ENCODE measurements at regions of chr15 and their contacts with region 1.

Region 1: DNA sequence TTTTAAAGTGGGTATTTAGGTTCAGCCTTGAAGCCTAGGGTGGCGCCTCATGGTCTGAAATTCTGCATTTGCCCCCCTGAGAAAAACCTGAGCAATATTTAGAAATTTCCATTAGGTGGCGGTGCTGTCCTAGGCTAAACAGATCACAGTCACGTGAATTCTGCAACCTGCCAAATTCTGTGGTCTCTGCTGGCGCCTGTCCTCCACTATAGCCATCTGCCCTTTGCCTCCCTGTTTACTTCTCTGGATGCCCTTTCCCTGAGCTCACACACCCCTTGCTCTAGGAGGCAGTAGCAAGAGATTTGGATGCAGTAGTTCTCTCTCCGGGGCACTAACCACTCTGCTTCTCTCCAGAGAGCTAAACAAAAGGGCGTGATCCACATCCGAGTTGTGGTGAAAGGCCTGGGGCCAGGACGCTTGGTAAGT is 9.1 kb downstream of the MRPS11 start:
- DNase-seq: no peak
- H3K4me3 ChIP-seq: no peak overlapping the region
- H3K27ac ChIP-seq: no peak overlapping the region
- H3K4me1 ChIP-seq: no peaks in the 10 kb centered on the region
- H3K27me3 ChIP-seq: no peaks in the 10 kb centered on the region
- CTCF ChIP-seq: peak; percentile 68

Region 2: DNA sequence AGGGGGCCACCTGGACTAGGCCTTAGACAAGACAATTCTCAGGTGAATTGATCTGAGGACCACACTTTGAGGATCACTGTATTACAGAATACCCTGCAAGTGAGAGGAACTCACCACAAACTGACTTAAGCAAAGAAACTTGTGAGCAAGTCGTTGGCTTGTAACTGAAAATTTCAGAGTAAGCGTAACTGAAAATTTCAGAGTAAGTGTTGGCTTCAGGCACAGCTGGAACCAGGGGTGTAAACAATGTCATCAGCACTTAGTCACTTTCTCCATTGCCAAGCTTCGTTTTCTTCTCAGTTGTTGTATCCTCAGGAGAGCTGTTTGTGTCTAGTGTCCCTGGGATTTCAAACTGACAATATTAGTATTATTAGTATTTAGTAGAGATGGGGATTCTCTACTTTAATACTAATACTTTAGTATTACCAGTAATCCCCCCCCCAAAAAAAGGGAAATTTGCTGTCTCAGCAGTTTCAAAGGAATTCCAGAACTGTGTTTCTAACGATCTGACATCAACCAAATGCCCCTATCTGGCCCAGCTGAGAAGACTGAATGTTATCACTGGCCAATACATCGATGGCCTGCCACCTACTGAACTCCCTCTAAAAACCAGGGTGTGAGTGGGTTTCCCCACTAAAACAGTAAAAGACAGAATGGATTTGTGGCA is 694.6 kb before region 1 on chr15:
- CTCF ChIA-PET with region 1: no interaction called
- POLR2A ChIA-PET with region 1: no interaction called
- intact Hi-C with region 1: no loop called
- DNase-seq: no peak
- H3K4me3 ChIP-seq: no peak overlapping the region
- H3K27ac ChIP-seq: no peak overlapping the region
- H3K4me1 ChIP-seq: no peaks in the 10 kb centered on the region
- H3K27me3 ChIP-seq: no peaks in the 10 kb centered on the region; the same call in 1 of the 2 replicates
- CTCF ChIP-seq: no peak

Region 3: DNA sequence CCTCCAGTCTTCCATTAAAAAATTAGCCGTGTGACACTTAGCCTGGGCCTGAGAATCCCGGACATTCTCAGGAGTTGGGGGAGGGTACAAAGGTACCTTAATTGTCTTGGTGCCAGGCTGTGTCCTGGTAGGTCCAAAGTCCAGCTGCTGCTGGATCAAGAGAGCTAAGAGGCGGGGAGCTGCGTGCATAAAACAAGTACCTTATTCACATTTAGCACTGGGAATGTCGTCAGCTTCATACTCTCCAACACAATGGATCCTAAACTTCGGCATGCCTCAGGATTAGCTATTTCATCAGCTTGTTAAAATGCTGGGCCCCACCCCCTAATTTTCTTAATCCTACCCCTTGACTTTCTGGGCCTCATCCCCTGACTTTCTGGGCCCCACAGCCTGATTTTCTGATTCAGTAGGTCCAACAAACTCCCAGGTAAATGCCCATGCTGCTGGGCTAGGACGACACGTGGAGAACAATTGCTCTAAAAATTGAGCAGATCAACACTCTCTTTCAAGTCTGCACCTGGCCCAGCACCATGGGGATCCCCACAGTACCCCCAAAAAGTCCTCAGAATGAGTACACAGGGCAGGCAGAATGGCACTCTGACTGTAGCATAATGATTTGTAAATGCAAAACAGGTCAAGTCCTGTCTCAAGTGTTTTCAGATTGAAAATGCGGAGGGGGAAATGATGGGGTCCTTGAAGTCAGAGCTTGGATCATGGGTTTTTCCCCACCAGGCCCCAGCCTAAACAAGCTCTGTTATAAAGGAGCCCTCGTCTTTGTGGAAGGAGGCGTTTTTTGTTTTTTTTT is 138.9 kb after region 1 on chr15:
- CTCF ChIA-PET with region 1: no interaction called
- POLR2A ChIA-PET with region 1: no interaction called
- intact Hi-C with region 1: loop called (anchors 2 kb)
- DNase-seq: no peak
- H3K4me3 ChIP-seq: no peak overlapping the region
- H3K27ac ChIP-seq: no peak overlapping the region
- H3K4me1 ChIP-seq: no peaks in the 10 kb centered on the region
- H3K27me3 ChIP-seq: no peaks in the 10 kb centered on the region
- CTCF ChIP-seq: no peak

Region 4: GRCh38 chr15:88664151-88664778 is 187.6 kb after region 1 on chr15:
- CTCF ChIA-PET with region 1: no interaction called
- POLR2A ChIA-PET with region 1: no interaction called
- intact Hi-C with region 1: loop called (anchors 1 kb)
- DNase-seq: no peak
- H3K4me3 ChIP-seq: no peak overlapping the region
- H3K27ac ChIP-seq: no peak overlapping the region
- H3K4me1 ChIP-seq: peaks cover 9% of the 10 kb centered on the region
- H3K27me3 ChIP-seq: no peaks in the 10 kb centered on the region; the same call in 1 of the 2 replicates
- CTCF ChIP-seq: peak; percentile 31

Region 5: GRCh38 chr15:88834211-88834812 is 357.7 kb after region 1 on chr15:
- CTCF ChIA-PET with region 1: no interaction called
- POLR2A ChIA-PET with region 1: no interaction called
- intact Hi-C with region 1: loop called (anchors 10 kb)
- DNase-seq: no peak
- H3K4me3 ChIP-seq: no peak overlapping the region
- H3K27ac ChIP-seq: no peak overlapping the region
- H3K4me1 ChIP-seq: no peaks in the 10 kb centered on the region
- H3K27me3 ChIP-seq: peaks cover 15% of the 10 kb centered on the region
- CTCF ChIP-seq: peak; percentile 62

Region 6: DNA sequence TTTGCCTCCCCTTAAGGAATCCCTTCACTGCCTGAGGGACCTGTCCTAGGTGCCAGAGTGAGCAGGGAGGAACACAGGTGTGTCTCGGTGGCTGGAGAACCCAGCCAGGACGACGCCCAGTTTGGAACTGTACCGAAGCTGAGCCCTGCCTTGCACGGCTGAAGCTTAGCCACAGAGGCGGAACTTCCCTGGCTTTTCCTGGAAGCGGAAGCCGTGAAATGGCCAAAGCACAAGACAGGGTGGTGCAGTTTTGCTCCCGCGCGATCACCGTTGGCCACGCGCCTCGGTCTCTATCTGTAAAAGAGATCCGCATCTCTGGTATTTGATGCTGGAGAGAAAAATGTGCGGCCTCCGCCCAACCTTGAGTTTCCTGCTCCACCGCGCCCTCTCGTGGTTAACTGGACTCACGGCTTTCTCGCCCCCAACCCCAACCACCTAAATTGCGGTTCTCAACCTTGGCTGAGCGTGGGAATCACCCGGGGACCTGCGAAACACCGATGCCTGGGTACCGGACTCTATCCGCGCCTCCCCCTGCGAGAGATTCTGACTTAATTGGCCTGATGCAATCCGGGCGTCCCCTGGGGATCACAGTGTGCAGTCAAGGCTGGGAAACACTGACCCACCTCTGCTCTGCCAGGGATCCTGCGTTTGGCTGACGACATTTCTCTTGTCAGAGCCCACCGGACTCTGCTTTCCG is 540.9 kb after region 1 on chr15:
- CTCF ChIA-PET with region 1: no interaction called
- POLR2A ChIA-PET with region 1: no interaction called
- intact Hi-C with region 1: loop called (anchors 10 kb)
- DNase-seq: peak; percentile 64 to 79
- H3K4me3 ChIP-seq: peak overlapping the region; percentile 42; the same call in 1 of the 2 replicates
- H3K27ac ChIP-seq: 0 out of 2 replicates have a peak overlapping the region, but pooled peaks have one; percentile 44
- H3K4me1 ChIP-seq: peaks cover 15% of the 10 kb centered on the region
- H3K27me3 ChIP-seq: no peaks in the 10 kb centered on the region
- CTCF ChIP-seq: peak; percentile 83